ENCODE measurements at regions of chr11 and their contacts with region 1.

Region 1: DNA sequence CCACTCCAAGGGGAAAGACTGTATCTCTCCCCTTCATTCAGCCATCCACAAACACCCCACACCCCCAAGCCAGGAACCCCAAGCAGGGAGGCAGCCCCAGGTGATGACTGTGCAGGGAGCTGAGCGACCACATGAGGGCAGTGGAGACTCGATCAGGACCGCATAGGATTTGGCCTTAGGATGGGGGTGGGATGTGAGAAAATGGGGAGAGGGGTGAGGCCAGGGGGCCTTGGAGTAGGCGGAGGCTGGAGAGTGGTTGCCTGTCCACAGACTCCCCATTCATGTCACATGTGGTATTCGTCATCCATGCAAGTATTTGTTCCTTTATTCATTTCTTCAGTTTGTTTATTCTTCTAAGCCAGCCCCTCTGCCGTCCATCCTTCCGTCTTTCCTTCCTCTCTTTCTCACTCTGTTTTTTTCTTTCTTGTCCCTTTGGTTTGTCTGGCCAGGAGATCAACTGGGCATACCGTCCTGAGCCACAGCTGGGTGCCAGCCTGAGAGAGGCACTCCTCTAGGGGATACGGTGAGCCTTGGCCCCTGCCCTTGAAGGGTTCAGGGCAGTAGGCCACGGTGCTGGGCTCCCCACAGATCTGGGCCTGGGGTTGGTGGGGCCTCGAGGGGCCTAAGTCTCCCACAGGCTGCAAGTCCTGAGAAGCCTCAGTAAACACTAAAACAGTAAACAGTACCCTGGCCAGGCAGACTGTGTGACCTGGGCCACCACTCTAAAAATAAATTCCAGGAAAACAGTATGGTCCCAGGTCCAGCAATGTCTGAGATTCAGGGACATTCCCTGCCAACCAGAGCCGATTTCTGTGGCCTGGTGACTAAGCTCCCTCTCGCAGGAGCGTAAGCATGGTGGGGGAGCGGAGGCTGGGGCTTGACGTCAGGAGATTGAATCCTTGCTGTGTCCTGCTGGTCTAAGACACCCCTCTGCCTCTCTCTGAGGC is 2.5 kb upstream of the RHOD start:
- DNase-seq: peak; percentile 83 to 85
- H3K4me3 ChIP-seq: no peak overlapping the region
- H3K4me3 Mint-ChIP-seq: no peak overlapping the region
- H3K27ac Mint-ChIP-seq: peak overlapping the region; percentile 92
- H3K4me1 ChIP-seq: peaks cover 40% of the 10 kb centered on the region
- H3K4me1 Mint-ChIP-seq: peaks cover 26% of the 10 kb centered on the region
- H3K27me3 ChIP-seq: no peaks in the 10 kb centered on the region
- H3K27me3 Mint-ChIP-seq: no peaks in the 10 kb centered on the region
- CTCF ChIP-seq: peak; percentile 96 to 99

Region 2: DNA sequence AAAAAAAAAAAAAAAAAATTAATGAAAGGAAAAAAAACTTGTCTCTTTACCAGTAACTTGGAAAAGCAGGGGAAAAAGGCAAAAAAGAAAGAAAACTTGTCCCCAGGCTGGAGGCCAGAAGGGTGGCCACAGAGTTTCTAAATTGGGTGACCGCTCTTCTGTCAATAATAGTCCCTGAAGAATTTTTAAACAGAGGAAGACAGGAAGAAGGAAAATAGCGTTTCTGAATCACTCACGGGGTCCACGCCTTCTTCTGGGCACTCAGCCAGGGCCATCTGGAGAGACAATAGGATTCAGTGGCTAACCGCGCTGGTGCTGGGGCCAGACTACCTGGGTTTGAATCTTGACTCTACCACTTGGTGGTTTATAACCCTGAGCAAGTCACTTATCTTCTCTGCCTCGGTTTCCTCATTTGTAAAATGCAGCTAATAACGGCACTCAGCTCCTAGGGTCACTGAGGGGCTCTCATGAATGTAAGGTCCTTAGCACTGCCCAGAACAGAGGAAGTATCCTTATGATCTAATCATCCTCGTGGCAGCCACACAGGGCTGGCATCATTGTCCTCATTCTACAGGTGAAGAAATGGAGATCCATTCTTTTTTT is 72.1 kb before region 1 on chr11:
- CTCF ChIA-PET with region 1: no interaction called
- POLR2A ChIA-PET with region 1: no interaction called
- intact Hi-C with region 1: no loop called
- DNase-seq: no peak
- H3K4me3 ChIP-seq: no peak overlapping the region
- H3K4me3 Mint-ChIP-seq: no peak overlapping the region
- H3K27ac Mint-ChIP-seq: no peak overlapping the region
- H3K4me1 ChIP-seq: no peaks in the 10 kb centered on the region
- H3K4me1 Mint-ChIP-seq: no peaks in the 10 kb centered on the region
- H3K27me3 ChIP-seq: no peaks in the 10 kb centered on the region
- H3K27me3 Mint-ChIP-seq: peaks cover 3% of the 10 kb centered on the region
- CTCF ChIP-seq: no peak

Region 3: GRCh38 chr11:67071420-67072284 is 17.5 kb after region 1 on chr11:
- CTCF ChIA-PET with region 1: interaction called, 12 read pairs
- POLR2A ChIA-PET with region 1: no interaction called
- intact Hi-C with region 1: loop called (anchors 2 kb)
- DNase-seq: peak in 1 of 2 experiments; percentile 69
- H3K4me3 ChIP-seq: no peak overlapping the region
- H3K4me3 Mint-ChIP-seq: no peak overlapping the region
- H3K27ac Mint-ChIP-seq: no peak overlapping the region
- H3K4me1 ChIP-seq: no peaks in the 10 kb centered on the region
- H3K4me1 Mint-ChIP-seq: no peaks in the 10 kb centered on the region
- H3K27me3 ChIP-seq: no peaks in the 10 kb centered on the region
- H3K27me3 Mint-ChIP-seq: no peaks in the 10 kb centered on the region
- CTCF ChIP-seq: peak; percentile 48 to 56

Region 4: DNA sequence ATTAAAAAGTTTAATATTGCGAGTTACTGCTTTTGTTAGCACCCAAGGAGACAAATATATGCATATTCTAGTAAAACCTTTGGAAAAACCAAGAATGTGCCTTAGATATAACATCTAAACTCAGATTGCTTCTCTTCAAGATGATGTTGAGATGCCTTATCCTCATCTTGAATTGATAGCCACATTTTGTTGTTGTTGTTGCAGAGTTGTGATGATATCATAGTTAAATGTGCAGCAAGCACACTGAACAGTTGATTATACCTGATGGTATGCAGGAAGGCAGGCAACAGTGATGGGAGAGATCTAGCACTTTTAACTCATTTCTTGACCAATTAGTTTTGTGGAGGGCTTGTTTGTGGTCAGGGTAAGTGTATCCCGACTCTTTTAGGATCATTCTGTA is 112.9 kb after region 1 on chr11:
- CTCF ChIA-PET with region 1: no interaction called
- POLR2A ChIA-PET with region 1: no interaction called
- intact Hi-C with region 1: loop called (anchors 1 kb)
- DNase-seq: no peak
- H3K4me3 ChIP-seq: no peak overlapping the region
- H3K4me3 Mint-ChIP-seq: no peak overlapping the region
- H3K27ac Mint-ChIP-seq: no peak overlapping the region
- H3K4me1 ChIP-seq: no peaks in the 10 kb centered on the region
- H3K4me1 Mint-ChIP-seq: no peaks in the 10 kb centered on the region
- H3K27me3 ChIP-seq: no peaks in the 10 kb centered on the region
- H3K27me3 Mint-ChIP-seq: no peaks in the 10 kb centered on the region
- CTCF ChIP-seq: no peak

Region 5: GRCh38 chr11:67303132-67303834 is 249.1 kb after region 1 on chr11 and contains the start of gene SSH3:
- CTCF ChIA-PET with region 1: no interaction called
- POLR2A ChIA-PET with region 1: no interaction called
- intact Hi-C with region 1: no loop called
- DNase-seq: peak; percentile 88 to 95
- H3K4me3 ChIP-seq: peak within 1 kb of the TSS; percentile 93
- H3K4me3 Mint-ChIP-seq: peak within 1 kb of the TSS; percentile 80
- H3K27ac Mint-ChIP-seq: peak within 1 kb of the TSS; percentile 86
- H3K4me1 ChIP-seq: peaks cover 23% of the 10 kb centered on the region
- H3K4me1 Mint-ChIP-seq: peaks cover 6% of the 10 kb centered on the region
- H3K27me3 ChIP-seq: no peaks in the 10 kb centered on the region
- H3K27me3 Mint-ChIP-seq: no peaks in the 10 kb centered on the region
- CTCF ChIP-seq: no peak
- total RNA-seq, gene SSH3: 81.2 and 89.6 TPM in 2 replicates

Measured in Caco-2 (cell line).